Activated CD8-positive, alpha-beta T cell treated with anti-CD3 and anti-CD28 coated beads, Interleukin-2, amount 10 ng/mL, durations not matched to agents 7 days and 5 days (primary cell): ENCODE measurements at regions of chr5 and their contacts with region 1.

Region 1: DNA sequence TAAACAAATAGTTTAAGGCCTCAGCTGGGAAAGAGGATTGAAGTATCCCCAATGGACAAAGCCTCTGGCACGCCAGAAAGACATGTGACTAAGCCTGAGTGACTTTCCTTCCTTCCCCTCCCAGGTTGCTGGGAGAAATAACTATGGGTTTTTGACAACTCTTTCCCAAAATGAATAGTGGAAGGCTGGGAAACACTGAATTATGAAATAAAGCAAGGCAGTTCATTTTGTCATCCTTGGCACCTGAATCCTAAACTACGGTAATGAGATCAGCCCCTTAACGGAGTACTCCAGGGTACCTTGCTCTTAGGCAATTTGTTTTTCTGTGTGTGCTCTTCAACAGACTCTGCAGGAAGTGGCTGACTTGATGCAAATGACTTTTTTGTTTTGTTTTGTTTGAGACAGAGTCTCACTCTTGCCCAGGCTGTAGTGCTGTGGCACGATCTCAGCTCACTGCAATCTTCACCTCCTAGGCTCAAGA is 75.2 kb downstream of the LMNB1 start:
- DNase-seq: peak; percentile 50
- ATAC-seq: peak; percentile 51
- H3K4me3 Mint-ChIP-seq: peak overlapping the region; percentile 72
- H3K27ac Mint-ChIP-seq: peak overlapping the region; percentile 96
- H3K4me1 Mint-ChIP-seq: peaks cover 56% of the 10 kb centered on the region
- H3K27me3 Mint-ChIP-seq: no peaks in the 10 kb centered on the region

Region 2: GRCh38 chr5:126869005-126869451 is 16.9 kb after region 1 on chr5:
- CTCF ChIA-PET with region 1: interaction called, 3 read pairs
- POLR2A ChIA-PET with region 1: interaction called, 12 read pairs
- DNase-seq: peak; percentile 51
- ATAC-seq: peak; percentile 86
- H3K4me3 Mint-ChIP-seq: peak overlapping the region; percentile 54
- H3K27ac Mint-ChIP-seq: peak overlapping the region; percentile 51
- H3K4me1 Mint-ChIP-seq: peaks cover 10% of the 10 kb centered on the region
- H3K27me3 Mint-ChIP-seq: no peaks in the 10 kb centered on the region

Region 3: GRCh38 chr5:127030259-127031146 is 178.4 kb after region 1 on chr5 and contains the start of gene MARCHF3:
- CTCF ChIA-PET with region 1: interaction called, 4 read pairs
- POLR2A ChIA-PET with region 1: interaction called, 23 read pairs
- DNase-seq: peak; percentile 94
- ATAC-seq: peak; percentile 98
- H3K4me3 Mint-ChIP-seq: peak within 1 kb of the TSS; percentile 90
- H3K27ac Mint-ChIP-seq: peak within 1 kb of the TSS; percentile 79
- H3K4me1 Mint-ChIP-seq: peaks cover 15% of the 10 kb centered on the region
- H3K27me3 Mint-ChIP-seq: peaks cover 26% of the 10 kb centered on the region
- total RNA-seq, gene MARCHF3: 2.0 to 2.4 TPM

Region 4: DNA sequence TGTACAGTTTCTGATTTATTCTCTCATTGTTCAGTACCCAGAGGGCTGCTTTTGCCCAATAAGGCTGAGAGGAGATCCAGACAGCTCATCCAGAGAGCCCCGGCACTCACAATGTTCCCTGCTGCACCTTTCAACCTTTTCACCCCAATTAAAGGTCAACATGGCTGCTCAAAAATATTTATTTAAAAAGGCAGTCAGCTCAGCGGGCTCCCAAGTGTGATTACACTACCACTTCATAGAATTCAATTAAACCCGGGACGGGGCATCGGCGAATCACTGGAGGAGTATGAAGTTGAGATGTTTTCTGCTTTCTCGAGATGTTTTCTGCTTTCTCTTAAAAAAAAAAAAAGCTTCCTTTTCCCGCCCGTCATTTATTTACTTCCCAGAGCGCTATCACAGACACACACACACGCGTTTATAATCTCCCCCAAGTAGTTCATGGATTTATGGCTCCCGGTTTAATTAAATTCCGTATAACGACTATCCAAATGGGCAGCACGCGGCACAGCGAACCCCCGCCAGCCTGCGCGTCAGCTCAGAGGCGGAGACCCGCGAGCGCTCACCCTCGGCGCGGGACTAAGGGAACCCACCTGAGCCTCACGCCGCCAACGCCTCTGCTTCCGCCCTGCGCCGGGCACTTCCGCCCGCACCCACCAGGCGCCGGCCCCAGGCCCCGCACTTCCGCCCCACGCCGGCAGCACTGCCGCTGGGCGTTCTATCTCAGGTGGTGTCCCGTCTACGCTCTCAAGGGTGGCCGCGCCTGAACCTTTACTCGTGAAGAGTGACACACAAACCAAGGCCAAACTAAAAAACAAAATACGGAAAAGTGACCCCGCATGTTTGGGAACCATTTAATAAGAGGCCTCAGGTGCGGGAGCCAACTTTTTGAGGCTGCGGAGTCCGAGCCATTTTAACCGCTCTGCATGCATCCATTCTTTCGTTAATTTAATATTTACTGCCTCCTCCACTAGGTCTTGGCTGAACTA is 221.0 kb after region 1 on chr5 and contains the start of gene C5orf63:
- CTCF ChIA-PET with region 1: interaction called, 3 read pairs
- POLR2A ChIA-PET with region 1: interaction called, 18 read pairs
- DNase-seq: peak; percentile 79
- ATAC-seq: peak; percentile 99
- H3K4me3 Mint-ChIP-seq: peak within 1 kb of the TSS; percentile 86
- H3K27ac Mint-ChIP-seq: peak within 1 kb of the TSS; percentile 87
- H3K4me1 Mint-ChIP-seq: peaks cover 12% of the 10 kb centered on the region
- H3K27me3 Mint-ChIP-seq: peaks cover 2% of the 10 kb centered on the region
- total RNA-seq, gene C5orf63: 6.4 to 6.5 TPM